IMR-90 (cell line): ENCODE measurements at regions of chr3 and their contacts with region 1.

Region 1: DNA sequence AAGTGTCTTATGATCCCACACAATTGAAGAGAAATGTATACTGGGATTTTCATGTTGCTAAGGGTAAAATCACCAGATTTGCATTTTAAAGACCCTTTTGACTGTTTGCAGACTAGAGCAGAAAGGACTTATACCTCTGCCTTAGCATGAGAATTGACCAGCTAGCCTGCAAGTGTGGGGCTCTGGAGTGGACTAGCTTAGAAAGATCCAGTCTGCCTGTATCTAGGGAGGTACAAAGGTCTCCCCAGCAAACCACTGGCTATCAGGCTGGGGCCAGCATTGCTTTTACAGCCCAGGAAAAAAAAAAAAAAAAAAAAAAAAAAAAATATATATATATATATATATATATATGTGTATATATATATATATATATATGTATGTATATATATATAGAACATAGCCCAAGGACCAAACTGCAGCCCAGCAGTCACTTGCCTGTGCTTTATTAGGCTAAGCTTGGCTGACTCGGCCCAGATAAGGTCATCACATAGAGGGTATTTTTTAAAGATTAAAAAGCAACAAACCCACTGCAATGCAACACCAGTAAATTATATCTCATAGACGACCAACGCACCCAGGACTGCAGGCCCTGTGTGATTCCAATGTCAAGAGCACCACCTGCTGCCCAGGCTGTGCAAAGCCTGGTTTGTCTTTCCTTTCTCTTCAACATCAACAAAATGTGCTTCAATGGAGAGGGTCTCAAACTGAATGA is 63.7 kb downstream of the DCLK3 start:
- DNase-seq: peak; percentile 85
- ATAC-seq: peak; percentile 93
- H3K4me3 ChIP-seq: no peak overlapping the region
- H3K27ac ChIP-seq: no peak overlapping the region
- H3K4me1 ChIP-seq: no peaks in the 10 kb centered on the region; the same call in 1 of the 2 replicates
- H3K27me3 ChIP-seq: no peaks in the 10 kb centered on the region
- CTCF ChIP-seq: peak; percentile 97
- POLR2A ChIP-seq: no peak
- RAD21 ChIP-seq: peak; percentile 100

Region 2: GRCh38 chr3:35908366-35909232 is 792.1 kb before region 1 on chr3:
- CTCF ChIA-PET with region 1: no interaction called
- POLR2A ChIA-PET with region 1: no interaction called
- dilution Hi-C with region 1: no loop called
- in situ Hi-C with region 1: no loop called
- intact Hi-C with region 1: loop called (anchors 2 kb)
- DNase-seq: peak; percentile 70
- ATAC-seq: peak; percentile 72
- H3K4me3 ChIP-seq: no peak overlapping the region
- H3K27ac ChIP-seq: no peak overlapping the region
- H3K4me1 ChIP-seq: no peaks in the 10 kb centered on the region
- H3K27me3 ChIP-seq: no peaks in the 10 kb centered on the region
- CTCF ChIP-seq: peak; percentile 61
- POLR2A ChIP-seq: no peak
- RAD21 ChIP-seq: peak; percentile 55

Region 3: DNA sequence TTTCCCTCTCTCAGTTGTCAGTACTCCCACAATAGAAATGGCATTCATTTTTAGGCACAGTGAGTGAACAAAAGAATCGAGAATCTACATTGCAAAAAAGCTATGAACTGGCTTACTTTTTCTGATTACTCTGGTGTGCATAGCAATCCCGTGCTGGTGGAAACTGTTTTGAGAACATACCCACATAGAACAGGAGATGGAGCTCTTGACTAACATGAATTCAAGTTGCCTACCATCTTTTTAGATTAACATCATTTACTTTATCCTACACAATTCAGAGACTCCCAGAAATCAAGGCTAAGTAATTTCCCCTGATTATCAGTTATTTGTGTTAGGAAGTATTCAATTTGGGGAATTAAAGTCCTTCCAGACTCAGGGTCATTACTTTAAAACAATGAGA is 734.8 kb before region 1 on chr3:
- CTCF ChIA-PET with region 1: interaction called, 5 read pairs
- POLR2A ChIA-PET with region 1: no interaction called
- dilution Hi-C with region 1: no loop called
- in situ Hi-C with region 1: loop called (anchors 5 kb)
- intact Hi-C with region 1: loop called (anchors 1 kb)
- DNase-seq: peak; percentile 55
- ATAC-seq: peak; percentile 84
- H3K4me3 ChIP-seq: no peak overlapping the region
- H3K27ac ChIP-seq: no peak overlapping the region
- H3K4me1 ChIP-seq: no peaks in the 10 kb centered on the region
- H3K27me3 ChIP-seq: no peaks in the 10 kb centered on the region
- CTCF ChIP-seq: peak; percentile 59
- POLR2A ChIP-seq: no peak
- RAD21 ChIP-seq: peak; percentile 67

Region 4: GRCh38 chr3:36124118-36124796 is 576.4 kb before region 1 on chr3:
- CTCF ChIA-PET with region 1: no interaction called
- POLR2A ChIA-PET with region 1: no interaction called
- dilution Hi-C with region 1: no loop called
- in situ Hi-C with region 1: no loop called
- intact Hi-C with region 1: loop called (anchors 2 kb)
- DNase-seq: peak; percentile 0
- ATAC-seq: no peak
- H3K4me3 ChIP-seq: no peak overlapping the region
- H3K27ac ChIP-seq: no peak overlapping the region
- H3K4me1 ChIP-seq: no peaks in the 10 kb centered on the region
- H3K27me3 ChIP-seq: no peaks in the 10 kb centered on the region
- CTCF ChIP-seq: 0 out of 2 replicates have a peak, but pooled peaks have one; percentile 7
- POLR2A ChIP-seq: no peak
- RAD21 ChIP-seq: no peak

Region 5: GRCh38 chr3:36408146-36408545 is 292.5 kb before region 1 on chr3:
- CTCF ChIA-PET with region 1: no interaction called
- POLR2A ChIA-PET with region 1: no interaction called
- dilution Hi-C with region 1: no loop called
- in situ Hi-C with region 1: no loop called
- intact Hi-C with region 1: loop called (anchors 5 kb)
- DNase-seq: no peak
- ATAC-seq: no peak
- H3K4me3 ChIP-seq: no peak overlapping the region
- H3K27ac ChIP-seq: no peak overlapping the region
- H3K4me1 ChIP-seq: no peaks in the 10 kb centered on the region
- H3K27me3 ChIP-seq: no peaks in the 10 kb centered on the region
- CTCF ChIP-seq: no peak
- POLR2A ChIP-seq: no peak
- RAD21 ChIP-seq: peak; percentile 9; the same call in 1 of the 2 replicates

Region 6: GRCh38 chr3:36540888-36541518 is 159.7 kb before region 1 on chr3:
- CTCF ChIA-PET with region 1: no interaction called
- POLR2A ChIA-PET with region 1: no interaction called
- dilution Hi-C with region 1: no loop called
- in situ Hi-C with region 1: no loop called
- intact Hi-C with region 1: loop called (anchors 5 kb)
- DNase-seq: peak; percentile 9
- ATAC-seq: peak; percentile 53; the same call in 1 of the 2 replicates
- H3K4me3 ChIP-seq: no peak overlapping the region
- H3K27ac ChIP-seq: no peak overlapping the region
- H3K4me1 ChIP-seq: no peaks in the 10 kb centered on the region
- H3K27me3 ChIP-seq: no peaks in the 10 kb centered on the region; the same call in 1 of the 2 replicates
- CTCF ChIP-seq: peak; percentile 53
- POLR2A ChIP-seq: no peak
- RAD21 ChIP-seq: peak; percentile 45

Region 7: DNA sequence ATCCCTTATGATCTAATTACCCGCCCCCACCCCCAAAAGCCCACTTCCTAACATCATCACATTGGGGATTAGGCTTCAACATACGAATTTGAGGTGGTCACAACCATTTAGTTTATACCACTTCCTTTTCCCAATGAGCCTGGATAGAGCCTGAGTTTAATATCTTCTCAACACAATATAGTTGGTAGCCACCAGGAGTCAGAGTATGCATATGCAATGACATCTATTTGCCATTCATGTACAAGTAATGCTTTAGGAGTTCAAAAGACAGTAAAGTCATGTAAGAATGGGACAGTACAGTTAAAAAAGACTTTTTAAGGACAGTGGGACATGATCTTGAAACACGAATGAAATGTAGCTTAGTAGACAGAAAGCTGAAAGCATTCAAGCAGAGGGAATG is 108.7 kb before region 1 on chr3:
- CTCF ChIA-PET with region 1: no interaction called
- POLR2A ChIA-PET with region 1: no interaction called
- dilution Hi-C with region 1: no loop called
- in situ Hi-C with region 1: no loop called
- intact Hi-C with region 1: loop called (anchors 1 kb)
- DNase-seq: peak; percentile 48
- ATAC-seq: peak; percentile 62
- H3K4me3 ChIP-seq: no peak overlapping the region
- H3K27ac ChIP-seq: no peak overlapping the region
- H3K4me1 ChIP-seq: no peaks in the 10 kb centered on the region
- H3K27me3 ChIP-seq: no peaks in the 10 kb centered on the region; the same call in 1 of the 2 replicates
- CTCF ChIP-seq: peak; percentile 50
- POLR2A ChIP-seq: no peak
- RAD21 ChIP-seq: peak; percentile 75